CD4-positive, alpha-beta memory T cell (primary cell): ENCODE measurements at regions of chr19 and their contacts with region 1.

Region 1: GRCh38 chr19:52336117-52336790 is at the start of gene ZNF610:
- DNase-seq: peak; percentile 82 to 85 (median 83)
- H3K4me3 ChIP-seq: peak within 1 kb of the TSS; percentile 76 to 94
- H3K4me3 Mint-ChIP-seq: peak within 1 kb of the TSS; percentile 97 to 99 (median 98)
- H3K27ac ChIP-seq: peak within 1 kb of the TSS; percentile 68
- H3K27ac Mint-ChIP-seq: peak within 1 kb of the TSS; percentile 93 to 98 (median 97)
- H3K4me1 ChIP-seq: peaks cover 8% of the 10 kb centered on the region
- H3K4me1 Mint-ChIP-seq: peaks cover 12 to 18% (median 15%) of the 10 kb centered on the region in 4 donors
- H3K27me3 ChIP-seq: no peaks in the 10 kb centered on the region
- H3K27me3 Mint-ChIP-seq: no peaks in the 10 kb centered on the region
- total RNA-seq, gene ZNF610: 4.8 to 6.0 TPM

Region 2: DNA sequence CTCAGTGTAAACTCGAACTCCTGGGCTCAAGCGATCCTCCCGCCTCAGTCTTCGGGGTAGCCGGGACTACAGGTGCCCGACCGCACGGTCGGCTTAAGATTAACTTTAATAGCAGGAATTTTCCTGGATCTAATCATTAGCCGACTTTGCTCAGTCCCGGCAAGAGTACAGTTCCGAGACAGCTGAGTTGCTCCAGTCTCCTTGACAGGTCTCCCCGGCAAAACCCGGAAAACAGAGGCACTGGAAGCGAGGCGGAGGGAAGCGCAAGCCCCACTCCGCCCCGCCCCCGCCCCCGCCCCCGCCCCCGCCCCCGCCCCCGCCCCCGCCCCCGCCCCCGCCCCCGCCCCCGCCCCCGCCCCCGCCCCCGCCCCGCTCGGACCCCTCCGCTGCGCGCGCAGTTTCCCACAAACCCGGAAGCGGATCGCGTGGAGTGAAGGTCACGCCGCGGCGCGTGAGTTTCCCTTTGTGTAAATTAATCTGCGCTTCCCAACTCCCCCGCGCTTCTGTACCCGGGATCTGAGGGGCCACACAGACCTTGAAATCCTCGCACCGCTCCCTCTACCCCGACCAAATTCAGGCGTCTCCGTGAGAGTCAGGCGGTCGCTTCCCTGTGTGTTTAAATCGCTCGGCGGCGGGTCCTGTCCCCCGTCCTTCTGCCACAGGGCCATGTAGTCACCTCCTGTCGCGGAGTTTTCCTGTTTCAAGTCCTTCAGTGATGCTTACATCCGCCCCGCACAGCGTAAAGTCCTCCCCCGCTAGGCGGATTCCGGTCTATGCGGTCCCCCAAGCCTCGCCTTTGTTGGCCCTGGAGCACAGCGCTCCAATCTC is 39.3 kb before region 1 on chr19 and contains the start of gene ZNF480:
- CTCF ChIA-PET with region 1: no interaction called
- POLR2A ChIA-PET with region 1: no interaction called
- intact Hi-C with region 1: loop called (anchors 2 kb)
- DNase-seq: peak; percentile 87 to 89 (median 87)
- H3K4me3 ChIP-seq: peak within 1 kb of the TSS; percentile 89 to 92
- H3K4me3 Mint-ChIP-seq: peak within 1 kb of the TSS; percentile 94 to 99 (median 96)
- H3K27ac ChIP-seq: peak within 1 kb of the TSS; percentile 72
- H3K27ac Mint-ChIP-seq: peak within 1 kb of the TSS; percentile 97 to 100 (median 98)
- H3K4me1 ChIP-seq: peaks cover 16% of the 10 kb centered on the region
- H3K4me1 Mint-ChIP-seq: peaks cover 17 to 24% (median 19%) of the 10 kb centered on the region in 4 donors
- H3K27me3 ChIP-seq: no peaks in the 10 kb centered on the region
- H3K27me3 Mint-ChIP-seq: peaks cover 0 to 3% of the 10 kb centered on the region in 2 donors
- total RNA-seq, gene ZNF480: 26.7 to 26.9 TPM

Region 3: GRCh38 chr19:52369559-52370340 is 33.5 kb after region 1 on chr19 and contains the start of gene ZNF880:
- CTCF ChIA-PET with region 1: interaction called, 3 read pairs
- POLR2A ChIA-PET with region 1: interaction called, 11 read pairs
- intact Hi-C with region 1: loop called (anchors 1 kb)
- DNase-seq: peak; percentile 86 to 89 (median 88)
- H3K4me3 ChIP-seq: peak within 1 kb of the TSS; percentile 94 to 96
- H3K4me3 Mint-ChIP-seq: peak within 1 kb of the TSS; percentile 92 to 96 (median 95)
- H3K27ac ChIP-seq: peak within 1 kb of the TSS; percentile 89
- H3K27ac Mint-ChIP-seq: peak within 1 kb of the TSS; percentile 97 to 99 (median 98)
- H3K4me1 ChIP-seq: peaks cover 10% of the 10 kb centered on the region
- H3K4me1 Mint-ChIP-seq: peaks cover 7 to 14% (median 11%) of the 10 kb centered on the region in 4 donors
- H3K27me3 ChIP-seq: no peaks in the 10 kb centered on the region
- H3K27me3 Mint-ChIP-seq: no peaks in the 10 kb centered on the region
- total RNA-seq, gene ZNF880: 31.2 to 33.5 TPM

Region 4: DNA sequence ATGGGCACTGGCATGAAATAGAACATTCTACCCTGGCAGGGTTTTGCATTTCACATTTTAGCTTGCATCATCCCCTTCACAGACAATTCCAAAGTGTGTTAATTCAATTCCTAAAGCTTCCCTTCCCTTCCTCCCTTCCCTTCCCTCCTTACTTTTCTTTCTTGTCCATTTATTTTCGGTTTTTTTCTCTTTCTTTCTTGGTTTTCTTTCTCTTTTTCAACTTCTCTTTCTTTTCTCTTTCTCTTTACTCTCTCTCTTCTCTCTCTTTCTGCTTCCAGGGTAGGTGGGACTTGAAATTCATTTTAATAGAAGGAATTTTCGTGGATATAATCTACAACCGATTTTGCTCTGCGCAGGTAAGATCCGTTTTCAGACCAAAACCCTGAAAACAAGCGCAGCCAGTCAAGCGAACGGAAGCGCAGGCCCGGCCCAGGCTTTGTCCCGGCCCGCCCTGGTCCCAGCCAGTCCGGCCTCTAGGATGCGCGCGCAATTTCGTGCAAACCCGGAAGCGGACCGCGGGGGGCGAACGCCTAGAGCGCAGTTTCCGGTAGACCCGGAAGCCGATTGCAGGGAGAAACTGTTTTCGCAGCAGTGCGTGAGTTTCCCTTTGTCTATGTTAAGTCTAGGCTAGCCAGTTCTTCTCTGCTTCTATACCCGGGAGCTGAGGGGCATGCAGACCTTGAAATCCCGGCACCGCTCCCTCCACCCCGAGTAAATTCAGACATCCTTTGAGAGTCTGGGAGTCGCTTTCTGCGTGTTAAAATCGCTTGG is 61.2 kb after region 1 on chr19 and contains the start of gene ZNF528:
- CTCF ChIA-PET with region 1: no interaction called
- POLR2A ChIA-PET with region 1: interaction called, 6 read pairs
- intact Hi-C with region 1: loop called (anchors 2 kb)
- DNase-seq: peak; percentile 85 to 93 (median 88)
- H3K4me3 ChIP-seq: peak within 1 kb of the TSS; percentile 89 to 98
- H3K4me3 Mint-ChIP-seq: peak within 1 kb of the TSS; percentile 86 to 95 (median 90)
- H3K27ac ChIP-seq: peak within 1 kb of the TSS; percentile 56
- H3K27ac Mint-ChIP-seq: peak within 1 kb of the TSS; percentile 76 to 93 (median 92)
- H3K4me1 ChIP-seq: peaks cover 14% of the 10 kb centered on the region
- H3K4me1 Mint-ChIP-seq: peaks cover 13 to 29% (median 22%) of the 10 kb centered on the region in 4 donors
- H3K27me3 ChIP-seq: no peaks in the 10 kb centered on the region
- H3K27me3 Mint-ChIP-seq: no peaks in the 10 kb centered on the region
- total RNA-seq, gene ZNF528: 44.6 to 49.9 TPM

Region 5: GRCh38 chr19:52570000-52570861 is 234.0 kb after region 1 on chr19 and contains the start of gene ZNF701:
- CTCF ChIA-PET with region 1: no interaction called
- POLR2A ChIA-PET with region 1: no interaction called
- intact Hi-C with region 1: no loop called
- DNase-seq: peak; percentile 95 to 96 (median 95)
- H3K4me3 ChIP-seq: peak within 1 kb of the TSS; percentile 89 to 96
- H3K4me3 Mint-ChIP-seq: peak within 1 kb of the TSS; percentile 91 to 98 (median 96)
- H3K27ac ChIP-seq: peak within 1 kb of the TSS; percentile 67
- H3K27ac Mint-ChIP-seq: peak within 1 kb of the TSS; percentile 83 to 99 (median 97)
- H3K4me1 ChIP-seq: peaks cover 16% of the 10 kb centered on the region
- H3K4me1 Mint-ChIP-seq: peaks cover 16 to 41% (median 34%) of the 10 kb centered on the region in 4 donors
- H3K27me3 ChIP-seq: no peaks in the 10 kb centered on the region
- H3K27me3 Mint-ChIP-seq: no peaks in the 10 kb centered on the region
- total RNA-seq, gene ZNF701: 51.1 to 51.7 TPM